Activated T-helper 1 cell treated with anti-CD3 and anti-CD28 coated beads, Interleukin-12 subunit alpha, Interleukin-12 subunit beta, Interleukin-2, Interleukin-4 antibody, amounts not matched to agents 30 ng/mL and 10 ng/mL and 1 ng/mL, durations not matched to agents 14 hours and 24 hours and 36 hours (primary cell): ENCODE measurements at regions of chr10 and their contacts with region 1.

Region 1: GRCh38 chr10:129466703-129467358 is at the start of gene MGMT:
- DNase-seq: peak; percentile 92
- H3K4me3 Mint-ChIP-seq: peak within 1 kb of the TSS; percentile 84
- H3K27ac Mint-ChIP-seq: peak within 1 kb of the TSS; percentile 65
- H3K4me1 Mint-ChIP-seq: peaks cover 7% of the 10 kb centered on the region
- H3K27me3 Mint-ChIP-seq: peaks cover 2% of the 10 kb centered on the region
- total RNA-seq, gene MGMT: 18.8 and 19.6 TPM in 2 replicates

Region 2: GRCh38 chr10:128047351-128047750 is 1419.5 kb before region 1 on chr10:
- intact Hi-C with region 1: loop called (anchors 5 kb)
- DNase-seq: peak; percentile 83
- H3K4me3 Mint-ChIP-seq: peak overlapping the region; percentile 94
- H3K27ac Mint-ChIP-seq: peak overlapping the region; percentile 96
- H3K4me1 Mint-ChIP-seq: peaks cover 49% of the 10 kb centered on the region
- H3K27me3 Mint-ChIP-seq: peaks cover 2% of the 10 kb centered on the region

Region 3: GRCh38 chr10:128125944-128126764 is 1340.7 kb before region 1 on chr10 and contains the start of gene MKI67:
- intact Hi-C with region 1: loop called (anchors 5 kb)
- DNase-seq: peak; percentile 88
- H3K4me3 Mint-ChIP-seq: peak within 1 kb of the TSS; percentile 98
- H3K27ac Mint-ChIP-seq: peak within 1 kb of the TSS; percentile 95
- H3K4me1 Mint-ChIP-seq: peaks cover 54% of the 10 kb centered on the region
- H3K27me3 Mint-ChIP-seq: peaks cover 2% of the 10 kb centered on the region
- total RNA-seq, gene MKI67: 141 and 159 TPM in 2 replicates

Region 4: GRCh38 chr10:129030996-129031843 is 435.6 kb before region 1 on chr10:
- intact Hi-C with region 1: loop called (anchors 10 kb)
- DNase-seq: peak; percentile 23
- H3K4me3 Mint-ChIP-seq: no peak overlapping the region
- H3K27ac Mint-ChIP-seq: no peak overlapping the region
- H3K4me1 Mint-ChIP-seq: peaks cover 13% of the 10 kb centered on the region
- H3K27me3 Mint-ChIP-seq: peaks cover 20% of the 10 kb centered on the region

Region 5: DNA sequence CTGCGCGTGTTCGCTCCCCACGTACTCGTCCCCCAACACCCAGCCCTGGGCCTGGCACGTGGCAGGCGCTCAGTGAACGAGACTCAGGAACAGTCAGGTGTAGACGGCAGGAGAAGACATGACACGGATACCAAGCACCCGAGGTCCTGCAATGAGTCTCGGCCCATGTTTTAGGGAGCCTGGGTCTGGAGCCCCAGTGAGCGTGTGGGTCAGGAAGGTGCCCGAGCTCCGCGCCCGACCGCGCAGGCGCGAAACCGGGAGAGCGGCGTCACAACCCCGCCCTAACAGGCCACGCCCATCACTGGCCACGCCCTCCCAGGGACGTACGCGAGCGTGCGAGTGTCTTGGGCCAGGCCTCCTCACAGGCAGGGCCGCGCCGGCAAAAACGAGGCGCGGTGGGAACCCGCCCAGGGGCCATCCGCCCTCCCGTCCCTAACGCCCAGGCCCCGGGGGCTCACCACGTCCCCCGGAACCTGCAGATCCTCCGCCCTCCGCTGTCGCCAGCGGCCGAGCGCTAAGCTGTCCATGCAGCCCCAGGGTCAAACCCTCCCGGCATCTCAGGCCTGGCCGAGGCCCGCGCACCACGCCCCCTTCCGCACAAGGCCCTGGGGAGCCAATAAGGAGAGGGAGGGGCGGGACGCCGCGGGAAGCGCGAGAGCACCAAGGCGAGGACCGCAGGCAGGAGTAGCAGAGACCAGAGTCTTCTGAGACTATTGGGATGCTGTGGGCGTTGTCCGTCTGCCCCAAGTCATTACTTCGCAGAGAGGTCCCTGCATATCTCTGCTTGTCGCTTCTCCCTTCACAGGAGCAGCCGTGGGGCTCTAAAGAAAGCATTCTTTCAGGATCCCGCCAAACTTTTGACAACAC is 643.6 kb after region 1 on chr10 and contains the start of gene C10orf143:
- intact Hi-C with region 1: loop called (anchors 1 kb)
- DNase-seq: peak; percentile 98
- H3K4me3 Mint-ChIP-seq: peak within 1 kb of the TSS; percentile 95
- H3K27ac Mint-ChIP-seq: peak within 1 kb of the TSS; percentile 99
- H3K4me1 Mint-ChIP-seq: peaks cover 60% of the 10 kb centered on the region
- H3K27me3 Mint-ChIP-seq: no peaks in the 10 kb centered on the region
- total RNA-seq, gene C10orf143: 3.3 and 3.6 TPM in 2 replicates

Region 6: GRCh38 chr10:130136226-130137089 is 669.6 kb after region 1 on chr10 and contains the start of gene GLRX3:
- intact Hi-C with region 1: loop called (anchors 1 kb)
- DNase-seq: peak; percentile 85
- H3K4me3 Mint-ChIP-seq: peak within 1 kb of the TSS; percentile 90
- H3K27ac Mint-ChIP-seq: peak within 1 kb of the TSS; percentile 84
- H3K4me1 Mint-ChIP-seq: peaks cover 53% of the 10 kb centered on the region
- H3K27me3 Mint-ChIP-seq: peaks cover 13% of the 10 kb centered on the region
- total RNA-seq, gene GLRX3: 119 and 129 TPM in 2 replicates

Region 7: DNA sequence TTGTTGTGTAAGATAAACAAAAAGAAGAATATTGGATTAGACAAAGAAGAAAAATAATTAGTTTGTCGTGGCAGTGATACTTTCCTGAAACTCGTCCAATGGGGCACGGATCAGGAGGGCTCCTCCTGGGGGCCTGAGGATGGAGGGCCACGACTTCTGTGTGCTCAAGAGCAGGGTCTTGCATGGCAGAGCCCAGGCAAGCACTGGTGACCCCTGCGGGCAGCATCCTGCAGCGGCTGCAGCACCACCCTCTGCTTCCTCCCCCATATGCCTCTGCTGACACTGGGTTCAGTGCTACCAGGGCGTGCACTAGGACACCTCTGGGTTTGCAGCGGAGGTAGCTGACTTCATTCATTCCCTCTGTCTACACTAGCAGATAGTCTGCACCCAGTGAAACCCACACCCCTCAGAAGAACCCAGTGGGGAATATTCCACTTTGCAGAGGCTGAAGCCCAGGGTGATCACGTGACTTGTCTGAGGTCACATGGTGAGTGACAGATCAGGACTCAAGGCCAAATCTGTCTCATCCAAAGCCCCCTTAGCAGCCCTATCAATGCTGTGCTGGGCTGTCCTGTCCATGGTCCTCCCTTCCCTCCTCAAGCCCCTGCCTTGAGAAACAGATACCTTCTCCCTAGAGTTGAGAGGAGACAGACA is 1469.2 kb after region 1 on chr10:
- intact Hi-C with region 1: no loop called
- DNase-seq: no peak
- H3K4me3 Mint-ChIP-seq: no peak overlapping the region
- H3K27ac Mint-ChIP-seq: no peak overlapping the region
- H3K4me1 Mint-ChIP-seq: no peaks in the 10 kb centered on the region
- H3K27me3 Mint-ChIP-seq: no peaks in the 10 kb centered on the region